ENCODE measurements at regions of chr11 and their contacts with region 1.

Region 1: DNA sequence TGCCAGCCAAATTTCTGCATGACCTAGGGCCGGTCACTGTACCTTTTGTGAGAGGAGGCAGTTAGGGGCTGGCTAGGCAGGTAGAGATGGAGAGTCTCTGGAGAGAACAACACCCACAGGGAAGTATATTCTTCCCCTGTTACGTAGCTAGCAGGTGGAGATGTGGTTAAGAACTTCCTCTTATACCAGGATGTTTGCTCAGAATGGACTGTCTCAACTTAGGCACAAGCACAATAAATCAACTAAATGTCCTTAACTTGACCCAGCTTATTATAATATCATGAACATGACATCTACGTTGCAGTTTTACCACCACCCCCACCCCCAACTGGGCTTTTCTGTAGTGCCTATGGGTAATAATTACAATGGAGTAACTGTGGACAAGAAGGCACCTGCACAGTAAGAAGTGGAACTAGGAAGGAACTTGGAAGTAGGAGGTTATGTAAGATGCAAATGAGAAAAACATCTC is 60.7 kb upstream of the MPEG1 start:
- DNase-seq: no peak
- H3K4me3 ChIP-seq: no peak overlapping the region
- H3K27ac ChIP-seq: no peak overlapping the region
- H3K27me3 ChIP-seq: peaks cover 0 to 2% (median 0%) of the 10 kb centered on the region in 45 donors
- CTCF ChIP-seq: no peak

Region 2: DNA sequence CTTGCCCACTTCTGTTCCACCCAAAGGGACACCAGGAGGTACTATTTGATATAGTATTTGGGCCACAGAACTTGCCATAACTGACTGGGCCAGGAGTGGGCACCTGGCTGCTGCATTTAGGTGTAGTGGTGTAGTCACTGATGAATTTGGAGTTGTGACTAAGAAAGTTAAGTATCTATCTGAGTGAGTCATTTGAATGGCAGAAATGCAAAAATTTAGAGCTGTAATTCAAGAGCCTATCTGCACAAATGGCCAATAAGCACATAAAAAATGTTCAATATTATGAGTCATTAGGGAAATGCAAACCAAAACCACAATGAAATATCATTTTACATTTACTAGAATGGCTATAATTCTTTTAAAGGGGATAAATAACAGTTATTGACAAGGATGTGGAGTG is 443.6 kb before region 1 on chr11:
- intact Hi-C with region 1: no loop called
- DNase-seq: no peak
- H3K4me3 ChIP-seq: no peak overlapping the region
- H3K27ac ChIP-seq: no peak overlapping the region
- H3K27me3 ChIP-seq: no peaks in the 10 kb centered on the region
- CTCF ChIP-seq: no peak

Region 3: GRCh38 chr11:59224351-59224928 is 49.0 kb before region 1 on chr11:
- intact Hi-C with region 1: loop called in 1 of 2 experiments (anchors 10 kb)
- DNase-seq: no peak
- H3K4me3 ChIP-seq: no peak overlapping the region
- H3K27ac ChIP-seq: no peak overlapping the region
- H3K27me3 ChIP-seq: peaks cover 0 to 2% (median 0%) of the 10 kb centered on the region in 45 donors
- CTCF ChIP-seq: no peak

Region 4: GRCh38 chr11:59437770-59438169 is 164.4 kb after region 1 on chr11:
- intact Hi-C with region 1: no loop called
- DNase-seq: no peak
- H3K4me3 ChIP-seq: no peak overlapping the region
- H3K27ac ChIP-seq: no peak overlapping the region
- H3K27me3 ChIP-seq: peaks cover 0 to 3% (median 0%) of the 10 kb centered on the region in 45 donors
- CTCF ChIP-seq: no peak

Measured in dorsolateral prefrontal cortex (tissue), 120 donors.